ENCODE measurements at regions of chr1 and their contacts with region 1.

Region 1: DNA sequence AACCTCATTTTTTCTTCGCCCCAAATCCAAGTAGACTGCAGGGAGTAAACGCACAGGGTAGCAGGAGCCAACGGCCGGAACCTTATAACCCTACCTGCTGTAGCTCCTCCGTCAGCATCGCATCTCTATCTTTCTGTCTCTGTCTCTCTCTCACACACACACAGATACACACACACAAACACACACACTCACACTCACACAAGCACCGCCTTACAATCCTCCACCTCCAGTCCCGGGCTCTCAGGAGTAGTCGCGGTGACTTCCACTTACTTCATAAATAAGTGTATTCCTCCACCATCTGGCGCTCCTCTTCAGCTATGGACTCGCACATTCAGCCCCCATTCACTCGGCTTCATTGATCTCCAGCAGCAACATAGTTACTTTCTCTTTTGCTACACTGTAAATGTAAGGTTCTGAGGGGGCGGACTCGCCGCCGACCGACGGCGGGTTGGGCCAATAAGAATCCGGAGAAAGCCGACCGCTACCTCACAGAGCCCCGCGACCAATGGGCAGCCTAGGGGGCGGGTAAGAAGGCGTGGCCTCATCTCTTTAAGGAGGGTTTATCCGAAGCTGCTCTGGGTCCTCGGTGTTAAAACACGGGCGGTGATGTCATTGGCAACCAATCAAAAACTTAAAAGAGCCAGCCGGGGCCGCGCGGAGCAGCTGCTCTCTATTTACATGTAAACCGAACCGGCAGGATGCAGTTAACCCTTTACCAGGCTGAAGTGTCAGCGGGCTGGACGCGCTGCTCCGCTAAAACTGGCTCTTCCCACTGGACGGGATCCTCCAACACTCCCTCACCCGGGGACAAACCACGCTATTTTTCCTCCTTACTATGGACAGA is at the start of gene DUSP10:
- DNase-seq: peak; percentile 100
- ATAC-seq: peak; percentile 91
- H3K4me3 Mint-ChIP-seq: no peak within 1 kb of the TSS
- H3K27ac Mint-ChIP-seq: no peak within 1 kb of the TSS
- H3K4me1 Mint-ChIP-seq: peaks cover 27% of the 10 kb centered on the region
- H3K27me3 Mint-ChIP-seq: no peaks in the 10 kb centered on the region
- CTCF ChIP-seq: no peak
- total RNA-seq, gene DUSP10: 10.8 to 12.9 TPM

Region 2: DNA sequence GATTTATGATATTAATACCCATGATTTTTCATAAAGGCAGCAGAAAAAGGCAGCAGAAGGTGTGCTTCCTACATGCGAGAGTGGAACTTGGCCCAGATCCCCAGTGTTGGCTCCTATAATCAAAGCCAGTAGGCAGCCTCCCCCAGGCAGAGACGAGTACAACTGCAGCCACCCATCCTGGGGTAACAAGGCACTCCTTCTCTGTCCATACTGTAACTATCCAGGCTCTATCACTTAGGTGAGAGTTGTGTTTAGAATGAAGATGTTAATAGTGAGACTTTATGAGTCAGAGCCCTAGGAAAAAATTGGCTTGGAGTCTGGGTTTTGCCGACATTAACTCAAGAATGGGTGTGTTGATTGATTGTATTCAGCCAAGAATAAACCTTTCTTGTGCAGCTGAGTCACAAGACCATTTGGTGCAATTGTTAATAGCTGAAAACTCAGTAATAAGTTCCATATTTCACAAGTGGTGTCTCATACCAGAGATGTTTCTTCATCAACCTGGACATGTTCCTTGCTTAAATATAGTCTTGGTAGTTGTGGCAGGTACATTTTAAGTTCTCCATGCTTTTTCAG is 322.3 kb before region 1 on chr1:
- CTCF ChIA-PET with region 1: no interaction called
- POLR2A ChIA-PET with region 1: no interaction called
- intact Hi-C with region 1: no loop called
- DNase-seq: no peak
- ATAC-seq: no peak
- H3K4me3 Mint-ChIP-seq: no peak overlapping the region
- H3K27ac Mint-ChIP-seq: no peak overlapping the region
- H3K4me1 Mint-ChIP-seq: no peaks in the 10 kb centered on the region
- H3K27me3 Mint-ChIP-seq: peaks cover 19% of the 10 kb centered on the region
- CTCF ChIP-seq: no peak

Region 3: DNA sequence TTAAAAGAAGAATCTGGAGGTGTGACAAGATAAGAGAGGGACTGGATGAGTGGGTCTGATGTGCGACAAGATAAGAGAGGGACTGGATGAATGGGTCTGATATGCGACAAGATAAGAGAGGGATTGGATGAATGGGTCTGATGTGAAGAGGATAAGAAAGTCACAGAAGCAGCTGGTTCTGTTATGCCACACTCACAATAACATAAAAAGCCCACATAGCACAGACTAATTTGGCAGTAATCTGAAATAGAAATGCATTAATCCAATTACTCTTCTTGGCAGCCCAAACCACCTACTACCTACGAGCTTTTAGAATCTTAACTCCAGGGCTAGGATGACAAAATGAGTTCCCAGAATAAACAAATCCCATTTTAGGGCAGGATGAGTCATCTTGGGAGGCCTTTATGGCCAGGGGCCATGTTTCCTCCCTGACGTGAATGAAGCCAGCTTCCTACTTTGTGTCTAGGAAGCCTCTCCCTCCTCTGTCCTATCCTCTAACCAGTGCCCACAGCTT is 129.6 kb before region 1 on chr1:
- CTCF ChIA-PET with region 1: no interaction called
- POLR2A ChIA-PET with region 1: no interaction called
- intact Hi-C with region 1: no loop called
- DNase-seq: no peak
- ATAC-seq: no peak
- H3K4me3 Mint-ChIP-seq: no peak overlapping the region
- H3K27ac Mint-ChIP-seq: no peak overlapping the region
- H3K4me1 Mint-ChIP-seq: no peaks in the 10 kb centered on the region
- H3K27me3 Mint-ChIP-seq: no peaks in the 10 kb centered on the region
- CTCF ChIP-seq: no peak

Region 4: DNA sequence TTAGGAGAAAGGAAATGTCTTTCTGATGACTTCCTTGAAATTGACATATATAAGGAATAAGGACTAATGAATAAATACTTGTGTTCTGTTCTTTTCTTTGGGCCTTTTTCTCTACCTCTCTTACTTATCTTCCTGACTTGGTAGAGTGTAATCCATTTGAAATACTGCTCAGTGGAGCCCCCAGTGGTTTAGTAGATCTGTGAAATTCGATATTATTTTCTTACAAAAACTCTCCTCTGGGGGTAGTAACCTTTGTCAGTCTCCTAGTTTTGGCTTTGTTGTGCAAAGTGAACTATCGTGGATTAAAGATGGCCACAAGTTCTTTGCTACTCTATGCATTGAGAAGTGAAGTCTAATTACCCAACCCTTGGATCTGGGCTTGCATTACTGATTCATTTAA is 48.8 kb before region 1 on chr1:
- CTCF ChIA-PET with region 1: no interaction called
- POLR2A ChIA-PET with region 1: interaction called, 3 read pairs
- intact Hi-C with region 1: loop called (anchors 5 kb)
- DNase-seq: peak; percentile 17
- ATAC-seq: peak; percentile 42
- H3K4me3 Mint-ChIP-seq: no peak overlapping the region
- H3K27ac Mint-ChIP-seq: no peak overlapping the region
- H3K4me1 Mint-ChIP-seq: peaks cover 16% of the 10 kb centered on the region
- H3K27me3 Mint-ChIP-seq: no peaks in the 10 kb centered on the region
- CTCF ChIP-seq: peak; percentile 57

Region 5: DNA sequence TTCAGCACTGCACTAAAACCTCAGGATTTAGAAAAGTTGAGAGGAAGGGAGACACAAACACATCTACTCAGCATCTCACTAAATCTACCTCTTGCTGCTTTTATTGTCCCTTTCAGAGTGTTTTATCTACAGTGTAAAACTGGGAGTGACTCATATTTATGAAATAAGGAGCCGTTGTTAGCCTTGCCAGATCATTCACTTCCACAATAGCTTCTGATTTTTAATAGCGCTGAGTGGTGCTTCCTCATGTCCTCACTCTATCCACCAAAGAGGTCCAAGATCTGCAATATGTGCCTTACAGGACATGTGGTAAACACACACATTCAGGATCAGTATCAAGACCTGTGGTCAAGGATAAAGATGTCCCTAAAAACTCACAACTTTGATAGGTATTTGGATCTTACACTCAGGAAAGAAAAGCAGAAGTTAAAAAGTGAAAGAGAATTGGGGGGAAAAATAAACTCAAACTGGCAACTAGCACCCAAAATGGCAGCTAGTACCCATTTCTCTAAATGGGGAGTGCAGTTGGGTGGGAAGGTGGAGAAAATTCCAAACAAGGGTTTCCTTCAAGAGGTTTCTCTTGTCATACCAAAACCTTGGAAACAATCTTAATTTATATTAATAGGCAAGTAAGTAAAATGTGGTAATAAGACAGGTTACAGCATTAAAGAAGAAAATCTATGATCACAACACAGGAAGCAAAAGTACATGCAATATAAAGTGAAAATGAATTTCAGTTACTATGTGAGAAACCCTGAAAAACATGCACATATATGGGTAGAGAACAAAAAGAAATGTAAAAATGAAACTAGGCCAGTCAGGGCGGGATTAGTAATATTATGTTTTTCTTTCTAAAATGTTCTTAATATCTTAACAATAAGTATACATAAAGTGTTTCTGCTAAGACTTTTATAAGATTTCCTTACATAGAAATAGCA is 15.9 kb before region 1 on chr1:
- CTCF ChIA-PET with region 1: interaction called, 16 read pairs
- POLR2A ChIA-PET with region 1: interaction called, 12 read pairs
- intact Hi-C with region 1: no loop called
- DNase-seq: no peak
- ATAC-seq: peak; percentile 78
- H3K4me3 Mint-ChIP-seq: peak overlapping the region; percentile 61
- H3K27ac Mint-ChIP-seq: peak overlapping the region; percentile 99
- H3K4me1 Mint-ChIP-seq: peaks cover 77% of the 10 kb centered on the region
- H3K27me3 Mint-ChIP-seq: no peaks in the 10 kb centered on the region
- CTCF ChIP-seq: no peak

Region 6: DNA sequence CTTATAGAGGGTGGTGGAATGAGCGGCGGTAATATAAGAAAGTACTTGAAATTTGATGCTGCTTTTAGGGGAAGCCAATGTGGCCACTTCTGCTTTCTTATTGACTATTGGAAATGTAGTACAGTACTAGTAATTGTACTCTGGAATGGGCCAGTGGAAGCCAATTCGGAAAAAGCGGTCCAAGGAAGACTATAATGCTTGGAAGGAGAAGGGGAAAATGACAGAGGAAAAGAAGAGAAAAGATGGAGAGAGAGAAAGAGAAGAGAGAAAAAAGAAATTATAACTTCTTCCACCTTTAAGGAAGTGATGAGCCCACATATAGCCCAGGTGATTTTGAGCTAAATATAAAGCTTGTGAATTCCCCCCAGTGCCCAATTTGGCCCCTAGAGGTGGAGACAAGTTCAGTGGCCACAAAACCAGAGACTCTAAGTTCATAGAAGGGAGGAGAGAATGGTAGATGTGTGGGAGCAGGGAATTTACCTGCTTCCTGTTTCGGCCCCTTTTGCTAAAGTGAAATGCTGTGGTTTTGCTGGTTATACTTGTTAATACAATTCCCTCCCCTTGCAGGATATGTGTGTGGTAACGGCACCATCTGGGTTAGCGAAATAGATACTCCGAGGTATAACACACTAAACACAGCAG is 35.6 kb after region 1 on chr1:
- CTCF ChIA-PET with region 1: interaction called, 7 read pairs
- POLR2A ChIA-PET with region 1: interaction called, 10 read pairs
- intact Hi-C with region 1: loop called (anchors 2 kb)
- DNase-seq: peak; percentile 82
- ATAC-seq: peak; percentile 67
- H3K4me3 Mint-ChIP-seq: peak overlapping the region; percentile 54
- H3K27ac Mint-ChIP-seq: peak overlapping the region; percentile 81
- H3K4me1 Mint-ChIP-seq: peaks cover 79% of the 10 kb centered on the region
- H3K27me3 Mint-ChIP-seq: no peaks in the 10 kb centered on the region
- CTCF ChIP-seq: peak; percentile 28

Region 7: GRCh38 chr1:222009105-222009730 is 267.3 kb after region 1 on chr1:
- CTCF ChIA-PET with region 1: interaction called, 7 read pairs
- POLR2A ChIA-PET with region 1: no interaction called
- intact Hi-C with region 1: loop called (anchors 5 kb)
- DNase-seq: peak; percentile 53
- ATAC-seq: peak; percentile 80
- H3K4me3 Mint-ChIP-seq: no peak overlapping the region
- H3K27ac Mint-ChIP-seq: no peak overlapping the region
- H3K4me1 Mint-ChIP-seq: no peaks in the 10 kb centered on the region
- H3K27me3 Mint-ChIP-seq: peaks cover 4% of the 10 kb centered on the region
- CTCF ChIP-seq: peak; percentile 52

Region 8: DNA sequence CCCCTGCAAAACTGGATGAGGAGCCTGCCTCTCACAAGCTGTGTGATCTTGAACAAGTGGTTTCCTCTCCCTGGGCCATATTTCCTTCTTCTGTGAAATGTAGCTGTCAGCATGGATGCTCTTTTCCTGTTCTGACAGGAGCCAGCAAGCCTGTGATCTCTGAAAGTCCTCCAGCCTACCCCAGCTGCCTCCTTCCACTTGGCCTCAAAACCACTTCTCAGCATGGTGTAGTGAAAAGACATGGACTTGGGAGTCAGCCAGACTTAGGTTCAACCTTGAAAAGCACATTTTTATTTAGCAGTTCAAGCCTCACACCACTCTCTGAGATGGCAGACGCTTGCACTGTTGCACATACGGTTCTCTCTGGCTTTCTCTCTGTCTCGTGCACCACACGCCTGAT is 292.9 kb after region 1 on chr1:
- CTCF ChIA-PET with region 1: no interaction called
- POLR2A ChIA-PET with region 1: no interaction called
- intact Hi-C with region 1: no loop called
- DNase-seq: no peak
- ATAC-seq: no peak
- H3K4me3 Mint-ChIP-seq: no peak overlapping the region
- H3K27ac Mint-ChIP-seq: no peak overlapping the region
- H3K4me1 Mint-ChIP-seq: no peaks in the 10 kb centered on the region
- H3K27me3 Mint-ChIP-seq: peaks cover 9% of the 10 kb centered on the region
- CTCF ChIP-seq: no peak